ENCODE measurements at regions of chr6 and their contacts with region 1.

Region 1: DNA sequence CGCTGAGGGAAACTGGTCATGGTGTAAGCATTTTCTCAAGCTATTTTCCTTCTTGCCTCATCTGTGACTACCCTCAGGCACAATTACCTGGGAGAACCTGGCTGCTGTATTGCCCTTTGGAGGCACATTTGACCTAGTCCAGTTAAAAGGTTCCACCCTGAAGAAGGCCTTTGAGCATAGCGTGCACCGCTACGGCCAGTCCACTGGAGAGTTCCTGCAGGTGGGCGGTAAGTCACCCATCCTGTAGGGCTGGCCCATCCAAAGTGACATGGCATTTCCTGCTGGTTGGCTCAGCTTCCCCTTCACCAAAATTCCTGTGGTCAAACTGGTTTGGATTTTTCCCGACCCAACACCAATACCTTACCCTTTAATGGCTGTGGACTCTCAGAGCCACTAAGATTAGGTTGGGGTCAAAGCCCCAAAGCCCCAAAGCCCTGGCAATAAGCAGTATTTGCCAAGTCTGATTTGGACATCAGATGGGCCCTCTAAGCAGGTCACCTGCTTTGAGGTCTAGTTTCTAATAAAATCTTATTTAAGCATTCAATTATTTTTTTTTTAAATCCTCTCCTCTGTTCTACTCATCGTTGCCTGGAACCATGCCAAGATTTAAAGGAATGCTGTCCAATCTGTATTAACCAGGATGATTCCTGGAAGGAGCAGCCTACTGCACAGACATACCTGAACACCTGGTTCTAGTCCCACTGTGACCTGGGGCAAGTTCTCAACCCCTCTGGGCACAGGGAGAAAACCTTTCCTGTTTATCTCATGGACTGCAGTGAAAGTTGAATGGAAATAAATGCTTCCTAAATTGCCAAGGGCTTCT is 40.8 kb downstream of the NT5E start:
- DNase-seq: peak; percentile 94 to 99
- H3K4me3 ChIP-seq: no peak overlapping the region
- H3K27ac ChIP-seq: peak overlapping the region; percentile 96
- H3K4me1 ChIP-seq: peaks cover 62% of the 10 kb centered on the region
- H3K27me3 ChIP-seq: no peaks in the 10 kb centered on the region
- CTCF ChIP-seq: no peak

Region 2: DNA sequence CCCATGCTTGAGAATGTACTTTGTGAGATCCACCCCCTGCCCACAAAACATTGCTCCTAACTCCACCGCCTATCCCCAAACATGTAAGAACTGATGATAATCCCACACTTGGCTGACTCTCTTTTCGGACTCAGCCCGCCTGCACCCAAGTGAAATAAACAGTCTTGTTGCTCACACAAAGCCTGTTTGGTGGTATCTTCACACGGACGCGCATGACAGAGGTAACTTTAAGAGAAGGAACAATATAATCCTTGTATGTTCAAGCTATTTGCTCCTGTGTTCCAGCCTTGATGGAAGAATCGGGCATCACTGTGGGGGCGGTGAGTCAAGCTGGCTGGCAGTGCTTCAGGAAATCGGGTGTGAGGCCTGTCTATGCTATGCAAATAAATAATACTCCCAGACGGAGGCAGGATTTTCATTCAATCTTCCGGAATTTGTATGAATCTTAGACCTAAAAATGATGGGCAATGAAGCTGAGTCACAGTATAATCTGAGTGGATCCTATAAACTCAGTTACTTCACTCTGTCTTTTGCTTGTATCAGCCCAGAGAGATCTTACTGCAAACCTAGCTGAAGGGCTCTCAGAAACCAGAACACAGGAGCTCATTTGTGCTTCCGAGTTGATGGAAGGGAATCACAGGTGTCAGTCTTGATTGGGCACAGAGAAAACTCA is 86.0 kb before region 1 on chr6:
- CTCF ChIA-PET with region 1: no interaction called
- POLR2A ChIA-PET with region 1: no interaction called
- intact Hi-C with region 1: loop called (anchors 1 kb)
- DNase-seq: peak; percentile 60 to 73
- H3K4me3 ChIP-seq: no peak overlapping the region; the same call in 1 of the 2 replicates
- H3K27ac ChIP-seq: peak overlapping the region; percentile 75
- H3K4me1 ChIP-seq: peaks cover 51% of the 10 kb centered on the region
- H3K27me3 ChIP-seq: no peaks in the 10 kb centered on the region
- CTCF ChIP-seq: no peak

Region 3: DNA sequence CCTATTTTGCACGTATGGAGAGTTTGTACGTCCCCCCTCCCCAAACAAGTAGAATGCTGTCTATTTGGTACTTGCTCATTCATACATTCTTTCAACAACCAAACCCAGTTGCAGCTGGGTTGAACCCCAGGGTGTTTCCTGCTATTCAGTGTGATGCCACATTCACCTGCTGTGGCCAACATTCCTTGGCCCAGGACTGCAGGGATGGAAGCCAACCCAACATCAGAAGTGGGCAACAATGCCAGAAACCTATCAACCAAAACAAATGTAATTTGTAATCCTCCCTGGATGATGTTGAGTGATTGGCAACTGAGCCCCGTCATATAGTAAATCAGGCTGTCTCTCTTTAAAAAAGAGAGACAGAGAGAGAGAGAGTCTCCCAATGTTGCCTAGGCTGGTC is 31.9 kb before region 1 on chr6:
- CTCF ChIA-PET with region 1: no interaction called
- POLR2A ChIA-PET with region 1: interaction called, 22 read pairs
- intact Hi-C with region 1: loop called (anchors 1 kb)
- DNase-seq: peak in 1 of 2 experiments; percentile 58
- H3K4me3 ChIP-seq: peak overlapping the region; percentile 20; the same call in 1 of the 2 replicates
- H3K27ac ChIP-seq: peak overlapping the region; percentile 98
- H3K4me1 ChIP-seq: peaks cover 100% of the 10 kb centered on the region
- H3K27me3 ChIP-seq: no peaks in the 10 kb centered on the region
- CTCF ChIP-seq: no peak

Region 4: GRCh38 chr6:85537055-85537494 is 46.4 kb after region 1 on chr6:
- CTCF ChIA-PET with region 1: interaction called, 3 read pairs
- POLR2A ChIA-PET with region 1: interaction called, 3 read pairs
- intact Hi-C with region 1: loop called (anchors 2 kb)
- DNase-seq: no peak
- H3K4me3 ChIP-seq: no peak overlapping the region
- H3K27ac ChIP-seq: peak overlapping the region; percentile 35; the same call in 1 of the 2 replicates
- H3K4me1 ChIP-seq: peaks cover 11% of the 10 kb centered on the region
- H3K27me3 ChIP-seq: no peaks in the 10 kb centered on the region
- CTCF ChIP-seq: peak; percentile 77

Region 5: DNA sequence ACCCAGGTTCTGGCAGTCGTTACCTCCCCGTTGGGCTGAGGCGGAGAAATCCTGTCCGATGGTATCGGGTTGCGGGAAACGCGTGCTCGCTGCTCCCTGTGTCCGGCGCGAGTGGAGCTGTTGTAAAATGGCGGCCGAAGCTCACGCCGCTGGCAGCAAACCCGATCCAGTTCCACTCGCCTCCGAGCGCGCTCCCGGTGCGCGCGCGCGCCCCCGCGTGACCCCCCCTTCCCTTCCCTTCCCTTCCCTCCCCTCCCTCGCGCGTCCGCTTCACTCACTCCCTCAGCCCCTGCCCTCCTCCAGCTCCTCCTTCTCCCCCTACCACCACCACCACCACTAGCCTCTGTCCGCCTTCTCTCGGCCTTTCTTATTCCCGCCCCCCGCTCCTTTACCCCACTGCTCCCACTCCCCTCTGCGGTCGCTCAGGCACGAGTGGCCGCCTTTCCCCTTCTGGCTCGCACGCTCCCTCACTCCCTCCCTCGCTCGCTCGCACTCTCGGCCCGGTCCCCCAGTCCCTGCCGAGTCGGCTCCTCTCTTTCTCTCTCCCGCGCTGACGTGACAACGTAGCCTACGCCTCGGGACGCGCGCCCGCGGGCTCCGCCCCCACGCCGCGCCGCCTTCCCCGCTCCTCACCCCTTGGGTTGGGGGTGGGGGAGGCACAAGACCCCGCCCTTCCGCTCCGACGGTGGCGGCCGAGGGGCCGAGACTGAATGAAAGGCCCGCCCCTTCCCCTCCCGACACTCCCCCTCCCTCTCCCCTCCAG is 152.3 kb after region 1 on chr6 and contains the start of gene SYNCRIP:
- CTCF ChIA-PET with region 1: no interaction called
- POLR2A ChIA-PET with region 1: interaction called, 19 read pairs
- intact Hi-C with region 1: loop called (anchors 5 kb)
- DNase-seq: peak; percentile 81 to 98
- H3K4me3 ChIP-seq: peak within 1 kb of the TSS; percentile 91
- H3K27ac ChIP-seq: peak within 1 kb of the TSS; percentile 99
- H3K4me1 ChIP-seq: peaks cover 30% of the 10 kb centered on the region
- H3K27me3 ChIP-seq: no peaks in the 10 kb centered on the region
- CTCF ChIP-seq: no peak
- total RNA-seq, gene SYNCRIP: 73.7 and 103 TPM in 2 replicates

Region 6: DNA sequence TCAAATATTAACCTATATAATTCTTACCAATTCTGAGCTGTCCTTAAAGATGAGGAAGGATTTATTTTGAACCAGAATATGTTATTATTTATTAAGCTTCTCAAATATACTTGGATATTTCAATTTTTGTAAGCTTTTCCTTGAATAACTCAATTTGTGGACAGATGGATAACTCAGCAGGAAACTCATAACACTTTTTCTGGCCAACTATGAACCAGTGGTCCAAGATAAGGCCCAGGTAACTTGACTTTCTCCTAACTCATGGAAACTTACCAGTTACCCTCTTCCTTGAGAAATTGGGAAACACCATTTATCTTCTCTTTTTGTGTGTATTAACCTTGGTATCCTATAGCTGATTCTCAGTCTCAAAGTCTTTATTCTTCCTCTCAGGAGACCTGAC is 579.5 kb after region 1 on chr6:
- CTCF ChIA-PET with region 1: no interaction called
- POLR2A ChIA-PET with region 1: no interaction called
- intact Hi-C with region 1: no loop called
- DNase-seq: no peak
- H3K4me3 ChIP-seq: no peak overlapping the region
- H3K27ac ChIP-seq: no peak overlapping the region
- H3K4me1 ChIP-seq: no peaks in the 10 kb centered on the region
- H3K27me3 ChIP-seq: no peaks in the 10 kb centered on the region
- CTCF ChIP-seq: no peak